PC-9 (cell line): ENCODE measurements at regions of chr11 and their contacts with region 1.

Region 1: GRCh38 chr11:1832211-1832919 is 2.4 kb upstream of the SYT8 start:
- DNase-seq: peak in 1 of 2 experiments; percentile 56
- H3K4me3 ChIP-seq: peak overlapping the region; percentile 31; the same call in 1 of the 2 replicates
- H3K27ac ChIP-seq: no peak overlapping the region
- H3K4me1 ChIP-seq: peaks cover 73% of the 10 kb centered on the region
- H3K27me3 ChIP-seq: no peaks in the 10 kb centered on the region
- CTCF ChIP-seq: peak; percentile 93

Region 2: GRCh38 chr11:1238767-1239595 is 593.4 kb before region 1 on chr11:
- CTCF ChIA-PET with region 1: no interaction called
- POLR2A ChIA-PET with region 1: no interaction called
- intact Hi-C with region 1: no loop called
- DNase-seq: no peak
- H3K4me3 ChIP-seq: no peak overlapping the region
- H3K27ac ChIP-seq: no peak overlapping the region
- H3K4me1 ChIP-seq: 0 out of 2 replicates have a peak, but pooled peaks cover 4% of the 10 kb centered on the region
- H3K27me3 ChIP-seq: no peaks in the 10 kb centered on the region
- CTCF ChIP-seq: no peak

Region 3: GRCh38 chr11:1652771-1653540 is 179.4 kb before region 1 on chr11:
- CTCF ChIA-PET with region 1: interaction called, 30 read pairs
- POLR2A ChIA-PET with region 1: no interaction called
- intact Hi-C with region 1: no loop called
- DNase-seq: peak in 1 of 2 experiments; percentile 61
- H3K4me3 ChIP-seq: no peak overlapping the region
- H3K27ac ChIP-seq: no peak overlapping the region
- H3K4me1 ChIP-seq: no peaks in the 10 kb centered on the region
- H3K27me3 ChIP-seq: peaks cover 39% of the 10 kb centered on the region
- CTCF ChIP-seq: peak; percentile 92

Region 4: DNA sequence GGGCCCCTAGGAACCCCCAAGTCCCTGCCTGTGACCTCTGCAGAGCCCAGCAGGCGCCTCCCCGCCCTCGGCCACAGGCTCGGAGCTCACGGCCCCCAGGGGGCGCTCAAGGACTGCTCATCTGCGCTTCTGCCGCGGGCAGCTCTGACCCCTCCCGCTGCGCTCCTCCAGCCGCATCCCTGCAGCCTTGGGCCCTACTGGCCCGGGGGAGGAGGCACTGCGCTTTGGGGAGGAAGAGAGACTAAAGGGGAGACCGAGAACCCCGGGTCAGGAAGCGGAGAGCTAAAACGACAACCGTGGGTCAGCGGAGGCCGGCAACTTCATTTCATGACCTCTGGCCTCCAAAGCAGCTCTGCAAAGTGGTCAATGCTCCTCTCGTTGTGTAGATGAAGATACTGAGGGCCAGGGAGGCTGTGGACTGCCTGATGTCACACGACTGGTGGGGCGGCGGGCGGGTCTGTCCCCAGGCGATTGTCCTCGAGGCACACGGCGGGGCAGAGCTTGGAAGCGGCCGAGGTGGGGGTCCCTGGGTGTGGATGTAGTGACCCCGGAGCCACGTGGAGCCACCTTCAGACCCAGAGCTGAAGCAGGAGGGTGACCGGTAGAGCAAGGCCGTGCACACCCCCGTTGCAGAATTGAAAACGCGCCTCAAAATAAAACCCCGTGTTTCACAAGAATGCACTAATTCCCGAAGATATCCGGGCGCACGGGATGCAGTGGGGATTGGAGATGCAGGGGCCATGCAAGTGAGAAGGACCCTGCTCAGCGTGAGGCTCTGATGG is 138.1 kb before region 1 on chr11:
- CTCF ChIA-PET with region 1: interaction called, 17 read pairs
- POLR2A ChIA-PET with region 1: interaction called, 3 read pairs
- intact Hi-C with region 1: loop called (anchors 1 kb)
- DNase-seq: peak; percentile 45 to 75
- H3K4me3 ChIP-seq: no peak overlapping the region; the same call in 1 of the 2 replicates
- H3K27ac ChIP-seq: no peak overlapping the region
- H3K4me1 ChIP-seq: peaks cover 11% of the 10 kb centered on the region
- H3K27me3 ChIP-seq: peaks cover 7% of the 10 kb centered on the region; the same call in 1 of the 2 replicates
- CTCF ChIP-seq: peak; percentile 85

Region 5: GRCh38 chr11:1705126-1706052 is 127.0 kb before region 1 on chr11:
- CTCF ChIA-PET with region 1: no interaction called
- POLR2A ChIA-PET with region 1: no interaction called
- intact Hi-C with region 1: loop called (anchors 2 kb)
- DNase-seq: peak; percentile 53 to 87
- H3K4me3 ChIP-seq: peak overlapping the region; percentile 51; the same call in 1 of the 2 replicates
- H3K27ac ChIP-seq: peak overlapping the region; percentile 76
- H3K4me1 ChIP-seq: peaks cover 27% of the 10 kb centered on the region
- H3K27me3 ChIP-seq: no peaks in the 10 kb centered on the region
- CTCF ChIP-seq: no peak

Region 6: DNA sequence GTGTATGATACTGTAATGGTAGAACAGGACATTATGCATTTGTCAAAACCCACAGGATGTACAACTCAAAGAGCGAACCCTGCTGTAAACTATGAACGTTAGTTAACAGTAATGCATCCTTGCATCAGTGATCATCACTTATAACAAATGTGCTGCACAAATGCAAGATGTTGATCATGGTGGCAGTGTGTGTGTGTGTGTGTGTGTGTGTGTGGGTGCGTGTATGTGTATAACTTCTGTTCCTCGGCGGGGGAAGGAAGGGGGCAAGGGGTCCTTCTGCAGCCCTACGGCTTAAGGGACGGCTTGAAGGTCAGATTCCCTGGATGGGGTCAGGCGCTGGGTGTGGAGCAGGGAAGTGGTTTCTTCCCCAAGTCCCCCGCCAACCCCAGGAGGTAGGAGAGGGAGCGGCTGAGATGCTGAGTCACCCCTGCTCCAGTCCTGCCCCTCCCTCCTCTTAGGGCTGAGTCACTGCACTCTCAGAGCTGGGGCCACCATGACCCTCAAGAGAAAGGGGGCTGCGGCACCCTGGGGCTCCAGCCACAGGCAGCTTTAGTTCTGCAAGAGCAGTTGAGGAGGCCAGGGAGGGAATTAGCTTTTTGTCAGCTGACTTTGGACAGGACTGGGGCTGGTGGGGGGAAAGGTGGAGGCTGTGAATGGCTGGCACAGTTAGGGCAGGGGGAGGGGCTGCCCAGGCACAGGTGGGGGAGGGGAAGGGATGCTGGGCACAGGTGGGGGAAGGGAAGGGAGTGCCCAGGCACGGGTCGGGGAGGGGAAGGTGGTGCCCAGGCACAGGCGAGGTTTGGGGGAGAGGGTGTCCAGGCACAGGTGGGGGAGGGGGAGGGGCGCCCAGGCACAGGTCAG is 59.9 kb before region 1 on chr11:
- CTCF ChIA-PET with region 1: interaction called, 12 read pairs
- POLR2A ChIA-PET with region 1: no interaction called
- intact Hi-C with region 1: no loop called
- DNase-seq: peak; percentile 81
- H3K4me3 ChIP-seq: peak overlapping the region; percentile 13; the same call in 1 of the 2 replicates
- H3K27ac ChIP-seq: peak overlapping the region; percentile 93
- H3K4me1 ChIP-seq: peaks cover 59% of the 10 kb centered on the region
- H3K27me3 ChIP-seq: no peaks in the 10 kb centered on the region
- CTCF ChIP-seq: no peak

Region 7: GRCh38 chr11:2015025-2015424 is 182.7 kb after region 1 on chr11:
- CTCF ChIA-PET with region 1: no interaction called
- POLR2A ChIA-PET with region 1: no interaction called
- intact Hi-C with region 1: no loop called
- DNase-seq: no peak
- H3K4me3 ChIP-seq: no peak overlapping the region
- H3K27ac ChIP-seq: no peak overlapping the region
- H3K4me1 ChIP-seq: no peaks in the 10 kb centered on the region
- H3K27me3 ChIP-seq: no peaks in the 10 kb centered on the region
- CTCF ChIP-seq: no peak

Region 8: DNA sequence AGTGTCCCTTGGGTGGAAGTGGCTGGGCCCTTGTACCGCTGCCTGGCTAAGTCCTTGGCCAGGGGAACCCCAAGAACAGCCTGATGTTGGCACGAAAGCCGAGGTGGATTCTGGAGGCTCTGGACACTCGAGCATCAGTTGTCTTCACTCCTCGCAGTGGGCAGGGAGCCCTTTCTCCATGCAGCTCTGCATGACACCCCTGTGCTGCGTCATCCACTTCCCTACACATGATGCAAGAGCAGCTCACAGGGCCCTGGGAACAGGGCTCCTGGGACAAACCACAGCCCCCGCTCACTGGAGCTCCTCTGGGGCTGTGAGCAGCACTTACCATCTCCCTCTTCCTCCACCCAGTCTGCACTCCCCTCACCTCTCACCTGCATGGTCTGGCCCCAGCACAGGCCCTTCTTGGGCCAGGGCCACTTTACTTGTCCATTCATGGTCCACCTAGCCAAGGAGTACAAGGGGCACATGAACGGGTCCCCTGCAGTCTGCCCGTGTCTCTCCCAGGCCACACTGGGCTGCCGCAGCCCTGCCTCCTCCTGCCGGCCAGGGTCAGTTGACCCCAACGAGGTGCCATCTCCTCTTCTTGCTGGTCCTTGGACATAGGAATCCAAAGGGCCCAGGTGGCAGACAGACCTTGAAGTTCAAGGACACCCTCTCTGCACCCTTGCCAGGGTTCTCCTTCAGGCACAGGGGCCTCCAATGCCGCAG is 240.3 kb after region 1 on chr11:
- CTCF ChIA-PET with region 1: no interaction called
- POLR2A ChIA-PET with region 1: no interaction called
- intact Hi-C with region 1: no loop called
- DNase-seq: no peak
- H3K4me3 ChIP-seq: no peak overlapping the region
- H3K27ac ChIP-seq: no peak overlapping the region
- H3K4me1 ChIP-seq: peaks cover 20% of the 10 kb centered on the region
- H3K27me3 ChIP-seq: no peaks in the 10 kb centered on the region
- CTCF ChIP-seq: no peak

Region 9: DNA sequence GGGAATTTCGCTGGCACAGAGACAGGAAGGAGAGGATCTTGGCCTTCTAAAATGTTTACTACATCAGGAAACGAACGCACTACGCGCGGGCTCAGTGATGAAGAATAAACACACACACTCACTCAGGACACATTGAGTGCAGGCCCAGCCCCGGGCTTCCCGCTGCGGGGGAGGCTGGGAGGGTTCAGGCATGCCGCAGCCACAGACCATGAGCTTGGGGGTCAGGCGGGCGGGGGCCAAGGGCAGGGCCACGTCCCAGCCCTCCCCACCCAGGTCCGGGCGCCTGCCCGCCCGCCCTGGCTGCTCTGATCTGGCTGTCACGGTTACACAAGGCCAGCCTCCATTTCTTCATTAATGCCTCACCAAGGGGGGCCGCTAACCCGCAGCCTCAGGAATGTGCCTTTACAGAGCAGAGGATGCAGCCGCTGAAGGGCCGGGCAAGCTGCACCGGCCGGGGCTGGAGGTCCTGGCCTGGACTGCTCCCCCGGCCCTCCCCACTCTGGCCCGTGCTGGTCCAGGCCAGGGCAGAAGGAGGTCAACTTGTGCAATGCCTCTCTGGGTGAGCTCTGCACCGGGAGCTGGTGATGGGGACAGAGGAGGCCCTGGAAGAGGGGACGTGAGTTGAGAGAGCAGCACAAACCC is 265.1 kb after region 1 on chr11:
- CTCF ChIA-PET with region 1: no interaction called
- POLR2A ChIA-PET with region 1: no interaction called
- intact Hi-C with region 1: no loop called
- DNase-seq: no peak
- H3K4me3 ChIP-seq: no peak overlapping the region
- H3K27ac ChIP-seq: no peak overlapping the region
- H3K4me1 ChIP-seq: peaks cover 13% of the 10 kb centered on the region
- H3K27me3 ChIP-seq: 0 out of 2 replicates have a peak, but pooled peaks cover 7% of the 10 kb centered on the region
- CTCF ChIP-seq: no peak

Region 10: DNA sequence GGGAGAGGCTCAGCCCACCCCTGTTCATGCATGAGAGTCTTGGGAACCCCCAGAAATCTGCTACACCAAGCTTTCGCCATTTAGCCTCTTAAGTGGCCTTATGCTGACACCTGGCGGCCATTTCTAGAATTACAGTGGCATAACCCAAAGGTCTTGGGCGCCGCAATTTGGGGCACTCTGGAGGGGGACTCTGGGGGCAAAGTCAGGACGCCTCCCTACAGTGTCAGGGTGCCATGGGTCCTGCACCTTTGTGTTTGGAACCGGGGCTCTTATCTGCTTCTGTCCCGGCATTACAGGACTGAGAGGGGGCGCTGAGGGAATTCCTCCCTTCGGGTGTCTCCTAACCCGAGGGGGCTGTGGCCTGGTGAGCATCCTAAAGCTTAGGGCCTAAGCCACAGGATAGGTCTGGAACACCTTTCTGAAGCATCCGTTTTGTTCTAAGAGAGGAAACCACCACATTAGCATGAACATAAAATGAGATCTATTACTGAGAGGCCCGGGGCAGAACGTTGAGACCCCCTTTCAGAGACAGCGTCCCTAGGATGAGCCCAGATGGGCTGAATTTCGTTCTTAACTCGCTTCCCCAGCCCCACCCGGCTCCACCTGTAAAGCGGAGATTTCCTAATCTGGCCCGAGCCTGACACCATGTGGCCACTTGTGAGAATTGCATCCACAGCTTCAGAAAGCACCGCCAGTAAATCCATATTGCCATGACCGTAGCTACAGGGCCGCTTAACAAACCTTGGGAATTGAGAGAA is 319.3 kb after region 1 on chr11:
- CTCF ChIA-PET with region 1: interaction called, 5 read pairs
- POLR2A ChIA-PET with region 1: no interaction called
- intact Hi-C with region 1: loop called (anchors 2 kb)
- DNase-seq: peak; percentile 54 to 67
- H3K4me3 ChIP-seq: no peak overlapping the region
- H3K27ac ChIP-seq: no peak overlapping the region
- H3K4me1 ChIP-seq: no peaks in the 10 kb centered on the region
- H3K27me3 ChIP-seq: no peaks in the 10 kb centered on the region
- CTCF ChIP-seq: peak; percentile 81

Region 11: DNA sequence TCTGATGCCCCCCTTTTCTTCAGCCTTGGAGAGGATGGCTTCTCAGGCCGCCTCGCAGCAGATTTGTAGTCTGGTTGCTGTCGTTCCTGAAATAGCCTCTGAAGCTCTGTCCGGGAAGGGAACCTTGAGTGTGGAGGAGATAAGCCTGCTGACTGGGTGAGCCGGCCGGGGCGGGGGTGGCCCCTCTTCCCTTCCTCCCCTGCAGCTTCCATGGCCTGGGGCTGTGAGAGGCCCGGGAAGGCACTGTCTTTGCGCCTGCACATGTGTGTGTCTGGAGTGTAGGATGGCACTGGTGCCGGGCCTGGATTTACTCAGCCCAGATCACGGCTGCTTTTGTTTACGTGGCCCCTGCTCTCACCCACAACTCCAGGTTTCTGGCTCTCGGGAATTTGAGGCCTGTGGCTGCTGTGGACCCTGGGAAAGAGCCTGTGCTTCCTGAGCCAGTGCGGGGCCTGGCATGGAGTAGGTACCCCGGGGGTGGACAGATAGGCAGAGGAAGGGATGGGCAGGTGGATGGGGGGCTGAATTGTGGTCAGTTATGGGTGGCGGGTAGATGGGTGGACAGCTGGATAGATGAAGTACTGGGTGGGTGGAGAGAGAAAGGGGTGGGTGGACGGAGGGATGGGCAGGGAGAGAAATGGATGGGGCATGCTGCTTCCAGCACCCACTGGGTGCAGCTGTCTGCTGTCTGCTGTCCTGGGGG is 629.0 kb after region 1 on chr11:
- CTCF ChIA-PET with region 1: interaction called, 17 read pairs
- POLR2A ChIA-PET with region 1: no interaction called
- intact Hi-C with region 1: no loop called
- DNase-seq: no peak
- H3K4me3 ChIP-seq: no peak overlapping the region
- H3K27ac ChIP-seq: no peak overlapping the region
- H3K4me1 ChIP-seq: no peaks in the 10 kb centered on the region
- H3K27me3 ChIP-seq: peaks cover 3% of the 10 kb centered on the region; the same call in 1 of the 2 replicates
- CTCF ChIP-seq: no peak